Lower leg skin (tissue), 4 donors: ENCODE measurements at regions of chr14 and their contacts with region 1.

Region 1: GRCh38 chr14:67166450-67166853 is 22.8 kb upstream of the GARIN2 start:
- DNase-seq: no peak
- H3K4me3 ChIP-seq: no peak overlapping the region
- CTCF ChIP-seq: no peak
- POLR2A ChIP-seq: no peak

Region 2: GRCh38 chr14:67285876-67286452 is 119.5 kb after region 1 on chr14:
- intact Hi-C with region 1: loop called (anchors 10 kb)
- DNase-seq: no peak
- H3K4me3 ChIP-seq: no peak overlapping the region
- CTCF ChIP-seq: no peak
- POLR2A ChIP-seq: no peak